ENCODE measurements at regions of chr3 and their contacts with region 1.

Region 1: GRCh38 chr3:14431892-14432834 is 29.8 kb downstream of the SLC6A6 start:
- DNase-seq: peak; percentile 95
- H3K4me3 ChIP-seq: no peak overlapping the region
- H3K27ac ChIP-seq: peak overlapping the region; percentile 68
- H3K4me1 ChIP-seq: peaks cover 55% of the 10 kb centered on the region
- H3K27me3 ChIP-seq: no peaks in the 10 kb centered on the region
- CTCF ChIP-seq: no peak

Region 2: DNA sequence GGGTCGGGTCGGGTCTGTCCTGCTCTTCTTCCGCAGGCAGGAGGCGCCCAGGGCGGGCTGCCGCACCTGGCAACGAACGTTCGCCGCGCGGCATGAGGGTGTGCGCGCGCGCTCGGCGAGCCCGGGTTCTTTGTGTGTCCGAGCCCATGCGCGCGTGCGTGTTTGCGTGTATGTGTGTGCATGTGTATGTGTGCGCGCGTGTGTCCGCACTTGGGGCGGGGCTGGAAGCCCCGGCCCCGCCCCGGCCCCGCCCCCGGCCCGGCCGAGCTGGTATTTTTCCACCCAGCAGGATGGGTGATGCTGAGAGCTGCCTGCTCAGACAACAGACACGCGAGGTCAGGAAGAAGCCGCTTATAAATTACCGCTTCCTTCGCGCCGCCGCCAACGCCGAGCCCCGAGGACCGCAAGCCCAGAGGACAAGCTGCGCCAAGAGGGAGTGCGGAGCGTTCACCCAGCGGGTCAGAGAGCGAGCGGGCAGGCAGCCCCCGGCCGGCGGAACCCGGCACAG is 29.8 kb before region 1 on chr3 and contains the start of gene SLC6A6:
- CTCF ChIA-PET with region 1: no interaction called
- POLR2A ChIA-PET with region 1: interaction called, 3 read pairs
- intact Hi-C with region 1: loop called (anchors 2 kb)
- DNase-seq: peak; percentile 96
- H3K4me3 ChIP-seq: peak within 1 kb of the TSS; percentile 91
- H3K27ac ChIP-seq: peak within 1 kb of the TSS; percentile 80
- H3K4me1 ChIP-seq: peaks cover 18% of the 10 kb centered on the region
- H3K27me3 ChIP-seq: no peaks in the 10 kb centered on the region
- CTCF ChIP-seq: peak; percentile 45
- total RNA-seq, gene SLC6A6: 48.8 and 55.1 TPM in 2 replicates